CD4-positive, alpha-beta T cell (primary cell): ENCODE measurements at regions of chr1 and their contacts with region 1.

Region 1: DNA sequence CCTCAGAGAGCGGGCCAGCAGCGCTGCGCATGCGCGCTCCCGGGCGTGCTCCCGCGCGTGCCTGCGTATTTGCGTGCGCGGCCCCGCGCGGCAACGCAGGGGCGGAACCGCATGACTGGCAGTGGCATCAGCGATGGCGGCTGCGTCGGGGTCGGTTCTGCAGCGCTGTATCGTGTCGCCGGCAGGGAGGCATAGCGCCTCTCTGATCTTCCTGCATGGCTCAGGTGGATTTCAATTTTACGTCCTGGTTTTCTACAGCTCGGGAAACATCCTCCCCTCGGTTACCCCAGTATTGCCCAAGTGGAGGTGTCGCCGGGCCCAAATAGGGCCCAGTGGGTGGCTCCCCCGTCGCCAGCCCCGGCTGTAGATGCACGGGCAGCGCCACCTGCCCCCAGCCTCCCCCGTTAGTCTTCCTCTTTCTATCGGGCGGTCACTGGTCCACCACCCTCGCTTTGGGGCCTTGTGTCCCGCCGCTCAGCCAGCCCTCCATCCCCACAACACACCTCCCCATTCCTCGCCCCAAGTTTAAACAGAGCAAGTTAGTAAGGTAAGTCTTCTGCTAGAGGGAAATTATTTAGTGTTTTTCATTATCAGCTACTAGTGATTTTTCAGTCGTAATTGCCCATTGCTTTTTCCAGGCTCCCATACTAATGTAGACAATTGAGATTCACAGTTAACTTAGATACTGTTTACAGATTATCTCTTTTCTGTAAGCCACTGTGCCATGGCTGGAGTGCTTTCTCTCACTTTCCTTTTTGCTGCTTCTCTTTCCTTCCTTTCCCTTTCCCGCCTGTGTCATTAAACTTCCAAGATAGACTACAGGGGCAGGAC is at the start of gene LYPLAL1:
- DNase-seq: peak; percentile 76 to 95 (median 87)
- ATAC-seq: peak; percentile 91
- H3K4me3 ChIP-seq: peak within 1 kb of the TSS; percentile 84
- H3K4me3 Mint-ChIP-seq: peak within 1 kb of the TSS; percentile 95
- H3K27ac ChIP-seq: peak within 1 kb of the TSS; percentile 45 to 74
- H3K27ac Mint-ChIP-seq: peak within 1 kb of the TSS; percentile 92
- H3K4me1 ChIP-seq: peaks cover 11% of the 10 kb centered on the region
- H3K4me1 Mint-ChIP-seq: peaks cover 56% of the 10 kb centered on the region
- H3K27me3 ChIP-seq: no peaks in the 10 kb centered on the region
- H3K27me3 Mint-ChIP-seq: no peaks in the 10 kb centered on the region
- CTCF ChIP-seq: no peak
- total RNA-seq, gene LYPLAL1: 8.2 to 10.0 TPM

Region 2: GRCh38 chr1:217630711-217631591 is 1543.0 kb before region 1 on chr1 and contains the starts of genes GPATCH2 and SPATA17:
- CTCF ChIA-PET with region 1: no interaction called
- POLR2A ChIA-PET with region 1: no interaction called
- intact Hi-C with region 1: loop called in 1 of 2 experiments (anchors 10 kb)
- DNase-seq: peak; percentile 62 to 94 (median 72)
- ATAC-seq: peak; percentile 88
- H3K4me3 ChIP-seq: peak within 1 kb of the TSS; percentile 78
- H3K4me3 Mint-ChIP-seq: peak within 1 kb of the TSS; percentile 94
- H3K27ac ChIP-seq: peak within 1 kb of the TSS; percentile 70 to 95
- H3K27ac Mint-ChIP-seq: peak within 1 kb of the TSS; percentile 98
- H3K4me1 ChIP-seq: peaks cover 7% of the 10 kb centered on the region
- H3K4me1 Mint-ChIP-seq: peaks cover 51% of the 10 kb centered on the region
- H3K27me3 ChIP-seq: no peaks in the 10 kb centered on the region
- H3K27me3 Mint-ChIP-seq: peaks cover 18% of the 10 kb centered on the region
- CTCF ChIP-seq: peak; percentile 20
- total RNA-seq, gene GPATCH2: 9.2 to 9.6 TPM
- total RNA-seq, gene SPATA17: not detected

Region 3: DNA sequence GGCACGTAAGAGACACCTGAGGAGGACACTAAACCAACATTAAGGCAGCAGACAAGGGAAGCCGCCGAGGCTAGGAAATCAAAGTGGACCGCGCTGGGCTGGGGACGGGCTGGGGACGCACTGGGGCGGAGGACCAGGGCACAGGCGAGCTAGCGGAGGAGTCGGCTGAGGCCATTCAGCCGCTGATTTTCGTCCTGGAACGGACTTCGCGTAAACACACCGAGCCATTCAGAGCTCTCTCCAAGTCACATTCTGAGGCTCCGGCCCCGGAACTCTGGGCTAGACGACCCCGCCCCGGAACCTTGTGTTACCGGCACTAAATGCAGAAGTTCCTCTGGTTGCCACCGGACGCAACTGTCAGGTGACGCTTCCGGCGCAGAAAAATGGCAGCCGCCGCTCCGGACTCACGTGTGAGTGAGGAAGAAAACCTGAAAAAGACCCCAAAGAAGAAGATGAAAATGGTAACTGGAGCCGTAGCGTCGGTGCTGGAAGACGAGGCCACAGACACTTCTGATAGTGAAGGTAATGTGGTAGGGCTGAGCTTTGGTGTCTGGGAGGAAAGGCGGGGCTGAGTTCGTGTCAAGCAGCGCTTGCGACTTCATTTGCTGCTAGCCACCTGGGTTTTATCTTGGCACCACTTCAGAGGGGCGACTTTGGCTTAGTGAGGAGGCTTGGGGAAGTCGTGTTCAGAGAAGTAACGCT is 888.9 kb before region 1 on chr1 and contains the start of gene RRP15:
- CTCF ChIA-PET with region 1: no interaction called
- POLR2A ChIA-PET with region 1: interaction called, 9 read pairs
- intact Hi-C with region 1: loop called in 1 of 2 experiments (anchors 5 kb)
- DNase-seq: peak; percentile 78 to 90 (median 81)
- ATAC-seq: peak; percentile 93
- H3K4me3 ChIP-seq: peak within 1 kb of the TSS; percentile 84
- H3K4me3 Mint-ChIP-seq: peak within 1 kb of the TSS; percentile 100
- H3K27ac ChIP-seq: peak within 1 kb of the TSS; percentile 55 to 65
- H3K27ac Mint-ChIP-seq: peak within 1 kb of the TSS; percentile 87
- H3K4me1 ChIP-seq: peaks cover 12% of the 10 kb centered on the region
- H3K4me1 Mint-ChIP-seq: peaks cover 51% of the 10 kb centered on the region
- H3K27me3 ChIP-seq: peaks cover 6 to 12% of the 10 kb centered on the region in 2 experiments
- H3K27me3 Mint-ChIP-seq: peaks cover 7% of the 10 kb centered on the region
- CTCF ChIP-seq: no peak
- total RNA-seq, gene RRP15: 10.5 to 15.2 TPM

Region 4: GRCh38 chr1:220046052-220046930 is 872.3 kb after region 1 on chr1 and contains the start of gene EPRS1:
- CTCF ChIA-PET with region 1: no interaction called
- POLR2A ChIA-PET with region 1: no interaction called
- intact Hi-C with region 1: loop called in 1 of 2 experiments (anchors 5 kb)
- DNase-seq: peak; percentile 86 to 99 (median 93)
- ATAC-seq: peak; percentile 98
- H3K4me3 ChIP-seq: peak within 1 kb of the TSS; percentile 99
- H3K4me3 Mint-ChIP-seq: peak within 1 kb of the TSS; percentile 97
- H3K27ac ChIP-seq: peak within 1 kb of the TSS; percentile 74 to 82
- H3K27ac Mint-ChIP-seq: peak within 1 kb of the TSS; percentile 91
- H3K4me1 ChIP-seq: peaks cover 19% of the 10 kb centered on the region
- H3K4me1 Mint-ChIP-seq: peaks cover 37% of the 10 kb centered on the region
- H3K27me3 ChIP-seq: no peaks in the 10 kb centered on the region
- H3K27me3 Mint-ChIP-seq: no peaks in the 10 kb centered on the region
- CTCF ChIP-seq: peak; percentile 66
- total RNA-seq, gene EPRS1: 37.4 to 39.6 TPM

Region 5: GRCh38 chr1:220089650-220090556 is 915.9 kb after region 1 on chr1 and contains the start of gene BPNT1:
- CTCF ChIA-PET with region 1: no interaction called
- POLR2A ChIA-PET with region 1: no interaction called
- intact Hi-C with region 1: loop called in 1 of 2 experiments (anchors 10 kb)
- DNase-seq: peak; percentile 94 to 100 (median 98)
- ATAC-seq: peak; percentile 76
- H3K4me3 ChIP-seq: peak within 1 kb of the TSS; percentile 80
- H3K4me3 Mint-ChIP-seq: peak within 1 kb of the TSS; percentile 94
- H3K27ac ChIP-seq: peak within 1 kb of the TSS; percentile 58 to 61
- H3K27ac Mint-ChIP-seq: peak within 1 kb of the TSS; percentile 79
- H3K4me1 ChIP-seq: peaks cover 20% of the 10 kb centered on the region
- H3K4me1 Mint-ChIP-seq: peaks cover 24% of the 10 kb centered on the region
- H3K27me3 ChIP-seq: no peaks in the 10 kb centered on the region
- H3K27me3 Mint-ChIP-seq: no peaks in the 10 kb centered on the region
- CTCF ChIP-seq: no peak
- total RNA-seq, gene BPNT1: 1.1 to 2.5 TPM

Region 6: DNA sequence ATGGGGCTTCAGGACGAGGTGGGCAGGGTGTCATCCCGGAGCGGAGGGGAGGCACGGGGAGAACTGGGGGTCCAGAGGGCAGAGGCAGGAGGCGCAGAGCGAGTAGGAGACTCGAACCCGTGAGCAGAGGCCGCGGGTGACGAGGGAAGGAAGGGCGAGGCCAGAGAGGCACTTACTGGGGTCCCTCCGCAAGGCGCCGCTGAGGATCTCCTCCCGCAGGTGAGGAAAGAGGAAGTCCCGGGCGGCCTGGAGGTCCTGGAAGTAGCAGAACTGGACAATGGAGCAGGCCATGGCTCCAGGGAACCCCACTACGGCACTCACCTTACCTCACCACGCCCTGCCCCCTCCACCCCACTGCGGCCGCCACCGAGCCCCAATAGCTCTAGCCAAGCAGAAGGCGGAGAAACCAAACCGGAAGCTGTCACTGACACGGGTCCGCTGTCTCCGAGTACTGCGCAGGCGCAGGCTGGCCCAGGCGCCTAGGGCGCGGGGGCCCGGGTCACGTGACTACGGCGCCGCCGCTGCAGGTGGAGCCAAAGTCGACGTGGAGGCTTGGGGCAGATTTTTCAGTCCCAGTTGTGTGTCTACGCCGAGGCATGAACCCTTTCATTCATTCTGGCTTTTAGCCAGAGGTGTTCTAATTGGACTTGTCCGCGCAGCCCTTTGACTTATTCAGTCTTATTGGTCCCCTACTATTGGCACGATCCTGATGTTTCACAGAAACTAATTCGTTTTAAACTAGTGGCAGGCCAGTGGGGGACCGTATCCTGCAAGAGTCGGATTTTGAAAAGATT is 1098.3 kb after region 1 on chr1 and contains the start of gene RAB3GAP2:
- CTCF ChIA-PET with region 1: no interaction called
- POLR2A ChIA-PET with region 1: no interaction called
- intact Hi-C with region 1: loop called in 1 of 2 experiments (anchors 5 kb)
- DNase-seq: peak; percentile 93 to 99 (median 96)
- ATAC-seq: peak; percentile 91
- H3K4me3 ChIP-seq: peak within 1 kb of the TSS; percentile 87
- H3K4me3 Mint-ChIP-seq: no peak within 1 kb of the TSS
- H3K27ac ChIP-seq: peak within 1 kb of the TSS; percentile 81 to 87
- H3K27ac Mint-ChIP-seq: no peak within 1 kb of the TSS
- H3K4me1 ChIP-seq: peaks cover 18% of the 10 kb centered on the region
- H3K4me1 Mint-ChIP-seq: peaks cover 18% of the 10 kb centered on the region
- H3K27me3 ChIP-seq: no peaks in the 10 kb centered on the region
- H3K27me3 Mint-ChIP-seq: peaks cover 5% of the 10 kb centered on the region
- CTCF ChIP-seq: no peak
- total RNA-seq, gene RAB3GAP2: 34.7 to 39.4 TPM